Left cardiac atrium (tissue), 4 donors: ENCODE measurements at regions of chr1 and their contacts with region 1.

Region 1: DNA sequence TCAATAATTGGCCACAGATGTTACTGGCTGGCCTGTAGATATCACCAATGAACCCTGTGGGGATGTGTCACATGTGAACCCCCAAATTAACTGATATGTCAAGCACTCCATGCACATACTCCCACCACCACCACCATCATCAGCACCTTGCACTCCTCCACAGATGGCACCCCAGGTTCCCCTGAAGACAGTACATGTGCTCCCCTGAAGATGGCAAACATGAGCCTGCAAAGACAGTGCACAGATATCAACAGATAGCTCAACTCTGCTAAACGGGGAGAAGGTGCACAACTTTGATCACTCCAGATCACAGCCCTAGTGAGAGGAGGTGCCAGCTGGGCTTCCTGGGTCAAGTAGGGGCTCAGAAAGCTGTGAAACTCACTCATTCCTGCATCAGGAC is 74.4 kb downstream of the CLCA4 start:
- DNase-seq: no peak
- ATAC-seq: no peak

Region 2: GRCh38 chr1:86537928-86538695 is 83.2 kb before region 1 on chr1:
- intact Hi-C with region 1: loop called in 1 of 2 experiments (anchors 5 kb)
- DNase-seq: no peak
- ATAC-seq: no peak